ENCODE measurements at regions of chr5 and their contacts with region 1.

Region 1: DNA sequence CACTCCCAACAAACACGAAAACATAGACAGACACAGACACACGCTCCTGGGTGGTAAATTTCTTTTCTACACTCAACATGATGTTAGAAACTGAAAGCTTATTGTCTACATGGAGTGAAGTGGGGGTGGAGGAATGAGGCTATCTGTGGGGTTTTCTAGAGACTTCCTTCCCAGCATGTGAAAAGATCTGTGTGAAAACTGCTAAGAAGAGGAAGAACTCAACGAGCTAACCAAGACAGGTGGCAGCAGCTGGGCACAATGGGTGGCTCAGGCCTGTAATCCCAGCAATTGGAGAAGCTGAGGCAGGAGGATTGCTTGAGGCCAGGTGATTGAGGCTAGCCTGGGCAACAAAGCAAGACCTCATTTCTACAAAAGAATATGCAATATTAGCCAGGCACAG is 7.6 kb downstream of the FYB1 start:
- DNase-seq: peak; percentile 48
- H3K4me3 Mint-ChIP-seq: peak overlapping the region; percentile 52
- H3K27ac Mint-ChIP-seq: peak overlapping the region; percentile 92
- H3K4me1 Mint-ChIP-seq: peaks cover 94% of the 10 kb centered on the region
- H3K27me3 Mint-ChIP-seq: no peaks in the 10 kb centered on the region

Region 2: GRCh38 chr5:38994324-38994927 is 217.3 kb before region 1 on chr5:
- CTCF ChIA-PET with region 1: no interaction called
- DNase-seq: peak; percentile 52
- H3K4me3 Mint-ChIP-seq: no peak overlapping the region
- H3K27ac Mint-ChIP-seq: no peak overlapping the region
- H3K4me1 Mint-ChIP-seq: peaks cover 4% of the 10 kb centered on the region
- H3K27me3 Mint-ChIP-seq: no peaks in the 10 kb centered on the region

Region 3: GRCh38 chr5:39121922-39122321 is 89.9 kb before region 1 on chr5:
- CTCF ChIA-PET with region 1: no interaction called
- DNase-seq: no peak
- H3K4me3 Mint-ChIP-seq: no peak overlapping the region
- H3K27ac Mint-ChIP-seq: no peak overlapping the region
- H3K4me1 Mint-ChIP-seq: peaks cover 6% of the 10 kb centered on the region
- H3K27me3 Mint-ChIP-seq: no peaks in the 10 kb centered on the region

Region 4: DNA sequence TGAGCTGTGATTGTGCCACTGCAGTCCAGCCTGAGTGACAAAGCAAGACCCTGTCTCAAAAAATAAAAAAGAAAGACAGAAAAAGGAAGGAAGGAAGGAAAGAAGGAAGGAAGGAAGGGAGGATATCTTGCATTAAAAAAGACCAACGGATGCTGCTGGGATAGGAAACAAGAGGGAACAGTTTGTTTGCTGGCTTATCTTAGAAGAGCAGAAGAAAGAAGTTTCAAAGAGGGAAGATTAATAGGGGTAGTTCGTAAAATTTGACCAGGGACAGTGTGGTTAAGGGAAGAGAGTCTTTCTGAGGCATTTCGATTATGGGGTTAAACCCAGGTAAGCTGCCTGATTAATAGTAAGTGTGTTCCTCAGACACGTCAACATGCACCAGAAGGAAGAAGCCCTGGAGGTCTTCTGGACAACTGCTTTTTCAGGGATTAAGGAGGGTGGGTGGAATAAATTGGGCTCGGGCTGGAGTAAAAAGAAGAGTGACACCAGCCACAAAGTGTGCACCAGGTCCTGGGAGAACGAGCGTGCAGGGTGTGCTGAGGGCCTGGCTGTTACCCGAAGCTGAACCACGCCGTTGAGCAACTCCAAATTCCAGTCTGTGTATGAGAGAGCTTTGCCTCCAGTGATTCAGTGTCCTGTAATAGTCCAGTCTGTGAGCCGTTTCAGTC is 17.2 kb before region 1 on chr5:
- CTCF ChIA-PET with region 1: interaction called, 57 read pairs
- DNase-seq: peak; percentile 35
- H3K4me3 Mint-ChIP-seq: peak overlapping the region; percentile 72
- H3K27ac Mint-ChIP-seq: peak overlapping the region; percentile 86
- H3K4me1 Mint-ChIP-seq: peaks cover 76% of the 10 kb centered on the region
- H3K27me3 Mint-ChIP-seq: no peaks in the 10 kb centered on the region